CD8-positive, alpha-beta T cell (primary cell): ENCODE measurements at regions of chr3 and their contacts with region 1.

Region 1: GRCh38 chr3:37967260-37967881 is 23.2 kb upstream of the VILL start:
- DNase-seq: peak in 8 of 9 experiments; percentile 20 to 70 (median 59)
- ATAC-seq: peak; percentile 83
- H3K4me3 ChIP-seq: no peak overlapping the region
- H3K4me3 Mint-ChIP-seq: no peak overlapping the region
- H3K27ac ChIP-seq: no peak overlapping the region
- H3K27ac Mint-ChIP-seq: no peak overlapping the region
- H3K4me1 ChIP-seq: no peaks in the 10 kb centered on the region
- H3K4me1 Mint-ChIP-seq: peaks cover 3% of the 10 kb centered on the region
- H3K27me3 ChIP-seq: no peaks in the 10 kb centered on the region
- H3K27me3 Mint-ChIP-seq: no peaks in the 10 kb centered on the region
- CTCF ChIP-seq: peak; percentile 63

Region 2: GRCh38 chr3:37862903-37863815 is 104.2 kb before region 1 on chr3:
- CTCF ChIA-PET with region 1: interaction called, 16 read pairs
- POLR2A ChIA-PET with region 1: no interaction called
- intact Hi-C with region 1: no loop called
- DNase-seq: no peak
- ATAC-seq: no peak
- H3K4me3 ChIP-seq: no peak overlapping the region
- H3K4me3 Mint-ChIP-seq: peak overlapping the region; percentile 90
- H3K27ac ChIP-seq: no peak overlapping the region
- H3K27ac Mint-ChIP-seq: no peak overlapping the region
- H3K4me1 ChIP-seq: peaks cover 13% of the 10 kb centered on the region
- H3K4me1 Mint-ChIP-seq: peaks cover 14% of the 10 kb centered on the region
- H3K27me3 ChIP-seq: peaks cover 0 to 17% of the 10 kb centered on the region in 2 experiments
- H3K27me3 Mint-ChIP-seq: peaks cover 9% of the 10 kb centered on the region
- CTCF ChIP-seq: no peak

Region 3: GRCh38 chr3:37932505-37932904 is 34.9 kb before region 1 on chr3:
- CTCF ChIA-PET with region 1: no interaction called
- POLR2A ChIA-PET with region 1: no interaction called
- intact Hi-C with region 1: no loop called
- DNase-seq: no peak
- ATAC-seq: no peak
- H3K4me3 ChIP-seq: no peak overlapping the region
- H3K4me3 Mint-ChIP-seq: no peak overlapping the region
- H3K27ac ChIP-seq: no peak overlapping the region
- H3K27ac Mint-ChIP-seq: no peak overlapping the region
- H3K4me1 ChIP-seq: no peaks in the 10 kb centered on the region
- H3K4me1 Mint-ChIP-seq: no peaks in the 10 kb centered on the region
- H3K27me3 ChIP-seq: no peaks in the 10 kb centered on the region
- H3K27me3 Mint-ChIP-seq: no peaks in the 10 kb centered on the region
- CTCF ChIP-seq: no peak

Region 4: DNA sequence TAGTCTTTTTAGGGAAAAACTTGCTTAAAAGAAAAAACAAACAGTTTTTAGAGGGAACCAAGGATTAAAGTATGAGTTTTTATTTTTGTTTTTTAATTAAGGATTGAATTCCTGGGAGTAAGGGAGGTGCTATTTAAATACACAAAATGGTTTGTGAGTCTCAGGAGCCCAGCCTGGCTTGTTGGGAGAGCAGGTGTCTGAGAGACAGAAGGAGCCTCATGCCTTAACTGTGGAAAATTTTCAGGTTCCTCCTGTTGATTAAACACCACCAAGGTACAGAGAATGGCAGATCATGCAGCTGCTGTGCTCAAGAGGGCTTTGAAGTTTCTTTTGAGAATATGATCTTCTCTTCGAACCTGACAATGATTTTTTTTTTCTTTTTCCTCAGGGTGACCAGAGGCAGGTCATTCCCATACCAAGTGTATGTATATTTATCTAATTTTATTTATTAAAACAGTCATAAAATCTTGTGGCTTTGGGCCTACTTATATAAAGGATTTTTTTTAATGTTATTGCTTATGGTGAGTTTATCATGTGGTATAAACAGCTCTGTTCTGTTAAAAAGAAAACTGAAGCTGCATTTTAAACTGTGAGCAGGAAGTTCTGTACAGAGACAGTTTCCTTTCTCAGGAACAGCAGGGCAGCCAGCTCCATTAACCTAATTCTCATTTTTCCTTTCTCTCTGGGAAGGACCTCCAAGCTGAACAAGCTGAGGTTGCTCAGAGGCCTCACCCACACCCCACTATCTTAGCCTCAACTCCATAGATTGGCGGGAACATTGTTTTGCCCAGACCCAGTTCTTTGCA is 10.4 kb before region 1 on chr3:
- CTCF ChIA-PET with region 1: interaction called, 27 read pairs
- POLR2A ChIA-PET with region 1: interaction called, 5 read pairs
- intact Hi-C with region 1: no loop called
- DNase-seq: peak in 1 of 9 experiments; percentile 23
- ATAC-seq: no peak
- H3K4me3 ChIP-seq: no peak overlapping the region
- H3K4me3 Mint-ChIP-seq: peak overlapping the region; percentile 52
- H3K27ac ChIP-seq: peak overlapping the region; percentile 34 to 50
- H3K27ac Mint-ChIP-seq: peak overlapping the region; percentile 93
- H3K4me1 ChIP-seq: peaks cover 23% of the 10 kb centered on the region
- H3K4me1 Mint-ChIP-seq: peaks cover 27% of the 10 kb centered on the region
- H3K27me3 ChIP-seq: no peaks in the 10 kb centered on the region
- H3K27me3 Mint-ChIP-seq: no peaks in the 10 kb centered on the region
- CTCF ChIP-seq: no peak

Region 5: GRCh38 chr3:38029400-38030125 is 62.2 kb after region 1 on chr3 and contains the start of gene PLCD1:
- CTCF ChIA-PET with region 1: no interaction called
- POLR2A ChIA-PET with region 1: no interaction called
- intact Hi-C with region 1: no loop called
- DNase-seq: peak in 7 of 9 experiments; percentile 25 to 69 (median 37)
- ATAC-seq: no peak
- H3K4me3 ChIP-seq: peak within 1 kb of the TSS; percentile 44 to 46
- H3K4me3 Mint-ChIP-seq: peak within 1 kb of the TSS; percentile 75
- H3K27ac ChIP-seq: no peak within 1 kb of the TSS
- H3K27ac Mint-ChIP-seq: no peak within 1 kb of the TSS
- H3K4me1 ChIP-seq: peaks cover 32% of the 10 kb centered on the region
- H3K4me1 Mint-ChIP-seq: peaks cover 27% of the 10 kb centered on the region
- H3K27me3 ChIP-seq: peaks cover 0 to 8% of the 10 kb centered on the region in 2 experiments
- H3K27me3 Mint-ChIP-seq: peaks cover 10% of the 10 kb centered on the region
- CTCF ChIP-seq: no peak
- total RNA-seq, gene PLCD1: 64.4 to 70.8 TPM